HEK293 (cell line): ENCODE measurements at regions of chr12 and their contacts with region 1.

Region 1: DNA sequence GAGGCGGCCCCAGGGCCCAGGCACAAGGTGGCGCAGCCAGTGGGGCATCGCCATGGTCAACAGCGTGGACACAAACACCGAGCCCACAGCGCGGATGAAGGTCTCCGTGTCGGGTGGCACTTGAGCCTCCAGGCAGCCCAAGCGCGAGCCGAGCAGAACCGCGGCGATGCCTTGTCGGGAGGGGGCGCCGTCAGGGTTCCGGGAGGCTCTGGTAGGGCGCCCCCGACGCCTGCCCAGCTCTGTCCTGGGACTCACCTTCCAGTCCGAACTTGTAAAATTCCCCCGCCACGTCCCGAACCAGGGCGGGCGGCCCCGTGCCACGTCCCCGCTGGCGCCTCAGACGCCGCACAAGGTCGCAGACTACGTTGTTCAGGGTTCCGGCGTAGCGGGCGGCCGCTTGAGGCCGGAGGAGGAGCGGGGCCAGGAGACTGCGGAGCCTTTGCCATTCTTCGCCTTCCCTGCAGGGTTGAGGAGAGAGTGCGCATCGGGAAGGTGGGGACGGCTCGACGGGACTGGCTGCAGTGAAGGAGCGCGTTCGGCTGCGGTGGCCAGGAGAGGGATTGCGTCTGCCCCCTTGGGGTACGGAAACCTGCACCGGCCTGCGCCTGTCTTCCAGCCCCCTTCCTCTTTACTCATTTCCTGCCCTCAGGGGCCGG is 1.7 kb downstream of the CYP27B1 start:
- H3K4me3 ChIP-seq: no peak overlapping the region
- H3K27ac ChIP-seq: no peak overlapping the region
- H3K4me1 ChIP-seq: peaks cover 15% of the 10 kb centered on the region
- CTCF ChIP-seq: peak; percentile 87

Region 2: GRCh38 chr12:57754411-57755193 is 10.6 kb before region 1 on chr12 and contains the start of gene MARCHF9:
- CTCF ChIA-PET with region 1: interaction called, 26 read pairs
- POLR2A ChIA-PET with region 1: interaction called, 8 read pairs
- H3K4me3 ChIP-seq: peak within 1 kb of the TSS; percentile 63
- H3K27ac ChIP-seq: peak within 1 kb of the TSS; percentile 69; the same call in 1 of the 2 replicates
- H3K4me1 ChIP-seq: peaks cover 16% of the 10 kb centered on the region
- CTCF ChIP-seq: no peak